CD4-positive, alpha-beta memory T cell (primary cell): ENCODE measurements at regions of chr7 and their contacts with region 1.

Region 1: GRCh38 chr7:90455163-90456030 is 14.0 kb upstream of the PTTG1IP2 start:
- DNase-seq: peak in 4 of 5 donors; percentile 15 to 44 (median 38)
- H3K4me3 ChIP-seq: no peak overlapping the region
- H3K4me3 Mint-ChIP-seq: peak overlapping the region in 7 of 8 donors; percentile 36 to 83 (median 54)
- H3K27ac ChIP-seq: no peak overlapping the region
- H3K27ac Mint-ChIP-seq: peak overlapping the region in 2 of 7 donors; percentile 69 to 87
- H3K4me1 ChIP-seq: peaks cover 7% of the 10 kb centered on the region
- H3K4me1 Mint-ChIP-seq: peaks cover 6 to 7% (median 6%) of the 10 kb centered on the region in 4 donors
- H3K27me3 ChIP-seq: no peaks in the 10 kb centered on the region
- H3K27me3 Mint-ChIP-seq: peaks cover 5 to 17% of the 10 kb centered on the region in 2 donors

Region 2: GRCh38 chr7:90465816-90466215 is 10.4 kb after region 1 on chr7:
- CTCF ChIA-PET with region 1: interaction called, 10 read pairs
- POLR2A ChIA-PET with region 1: no interaction called
- intact Hi-C with region 1: loop called (anchors 1 kb)
- DNase-seq: no peak
- H3K4me3 ChIP-seq: no peak overlapping the region
- H3K4me3 Mint-ChIP-seq: peak overlapping the region in 3 of 8 donors; percentile 4 to 16 (median 6)
- H3K27ac ChIP-seq: no peak overlapping the region
- H3K27ac Mint-ChIP-seq: no peak overlapping the region
- H3K4me1 ChIP-seq: no peaks in the 10 kb centered on the region
- H3K4me1 Mint-ChIP-seq: peaks cover 8 to 14% (median 11%) of the 10 kb centered on the region in 4 donors
- H3K27me3 ChIP-seq: no peaks in the 10 kb centered on the region
- H3K27me3 Mint-ChIP-seq: peaks cover 0 to 2% of the 10 kb centered on the region in 2 donors

Region 3: GRCh38 chr7:90595801-90596671 is 140.6 kb after region 1 on chr7 and contains the start of gene CDK14:
- CTCF ChIA-PET with region 1: no interaction called
- POLR2A ChIA-PET with region 1: no interaction called
- intact Hi-C with region 1: loop called (anchors 10 kb)
- DNase-seq: peak in 1 of 5 donors; percentile 10
- H3K4me3 ChIP-seq: no peak within 1 kb of the TSS
- H3K4me3 Mint-ChIP-seq: peak within 1 kb of the TSS; percentile 73 to 84 (median 80)
- H3K27ac ChIP-seq: no peak within 1 kb of the TSS
- H3K27ac Mint-ChIP-seq: no peak within 1 kb of the TSS
- H3K4me1 ChIP-seq: peaks cover 11% of the 10 kb centered on the region
- H3K4me1 Mint-ChIP-seq: peaks cover 8 to 20% (median 16%) of the 10 kb centered on the region in 4 donors
- H3K27me3 ChIP-seq: peaks cover 10% of the 10 kb centered on the region
- H3K27me3 Mint-ChIP-seq: peaks cover 37 to 40% of the 10 kb centered on the region in 2 donors
- total RNA-seq, gene CDK14: 0.47 to 0.81 TPM

Region 4: GRCh38 chr7:90629297-90629918 is 174.0 kb after region 1 on chr7:
- CTCF ChIA-PET with region 1: interaction called, 4 read pairs
- POLR2A ChIA-PET with region 1: no interaction called
- intact Hi-C with region 1: loop called (anchors 1 kb)
- DNase-seq: no peak
- H3K4me3 ChIP-seq: no peak overlapping the region
- H3K4me3 Mint-ChIP-seq: no peak overlapping the region
- H3K27ac ChIP-seq: no peak overlapping the region
- H3K27ac Mint-ChIP-seq: no peak overlapping the region
- H3K4me1 ChIP-seq: no peaks in the 10 kb centered on the region
- H3K4me1 Mint-ChIP-seq: no peaks in the 10 kb centered on the region
- H3K27me3 ChIP-seq: no peaks in the 10 kb centered on the region
- H3K27me3 Mint-ChIP-seq: peaks cover 0 to 1% of the 10 kb centered on the region in 2 donors

Region 5: DNA sequence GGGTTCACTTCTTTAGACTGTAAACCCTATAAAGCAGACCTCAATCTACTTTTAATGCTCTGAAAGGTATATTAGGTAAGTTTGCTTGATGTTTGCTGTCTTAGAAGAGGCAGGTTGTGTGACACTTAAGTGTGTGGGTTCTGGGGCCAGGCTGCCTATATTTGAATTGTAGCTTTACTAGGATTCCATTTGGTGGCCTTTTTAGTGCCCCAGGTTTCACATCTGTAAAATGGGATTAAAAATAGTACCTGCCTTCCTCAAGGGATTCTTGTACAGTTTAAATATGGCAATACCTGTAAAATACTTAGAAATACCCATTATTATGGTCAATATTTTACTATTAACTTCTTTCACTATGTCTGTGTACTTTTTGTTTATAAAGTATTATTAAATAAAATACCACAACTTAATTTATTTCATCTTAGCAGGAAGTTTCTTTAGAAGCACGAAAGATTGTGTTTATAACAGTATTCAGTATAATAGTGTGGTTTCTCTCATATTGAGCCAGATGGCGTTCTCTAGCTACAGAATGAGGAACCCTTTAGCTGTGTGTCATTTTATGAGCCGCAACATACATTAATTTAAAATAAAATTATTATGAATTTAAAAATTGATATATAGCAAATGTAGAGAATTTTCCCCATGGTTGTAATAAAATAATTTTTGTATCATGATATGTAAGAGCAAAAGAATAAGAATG is 234.9 kb after region 1 on chr7:
- CTCF ChIA-PET with region 1: no interaction called
- POLR2A ChIA-PET with region 1: no interaction called
- intact Hi-C with region 1: no loop called
- DNase-seq: no peak
- H3K4me3 ChIP-seq: no peak overlapping the region
- H3K4me3 Mint-ChIP-seq: no peak overlapping the region
- H3K27ac ChIP-seq: no peak overlapping the region
- H3K27ac Mint-ChIP-seq: no peak overlapping the region
- H3K4me1 ChIP-seq: no peaks in the 10 kb centered on the region
- H3K4me1 Mint-ChIP-seq: no peaks in the 10 kb centered on the region
- H3K27me3 ChIP-seq: no peaks in the 10 kb centered on the region
- H3K27me3 Mint-ChIP-seq: no peaks in the 10 kb centered on the region

Region 6: DNA sequence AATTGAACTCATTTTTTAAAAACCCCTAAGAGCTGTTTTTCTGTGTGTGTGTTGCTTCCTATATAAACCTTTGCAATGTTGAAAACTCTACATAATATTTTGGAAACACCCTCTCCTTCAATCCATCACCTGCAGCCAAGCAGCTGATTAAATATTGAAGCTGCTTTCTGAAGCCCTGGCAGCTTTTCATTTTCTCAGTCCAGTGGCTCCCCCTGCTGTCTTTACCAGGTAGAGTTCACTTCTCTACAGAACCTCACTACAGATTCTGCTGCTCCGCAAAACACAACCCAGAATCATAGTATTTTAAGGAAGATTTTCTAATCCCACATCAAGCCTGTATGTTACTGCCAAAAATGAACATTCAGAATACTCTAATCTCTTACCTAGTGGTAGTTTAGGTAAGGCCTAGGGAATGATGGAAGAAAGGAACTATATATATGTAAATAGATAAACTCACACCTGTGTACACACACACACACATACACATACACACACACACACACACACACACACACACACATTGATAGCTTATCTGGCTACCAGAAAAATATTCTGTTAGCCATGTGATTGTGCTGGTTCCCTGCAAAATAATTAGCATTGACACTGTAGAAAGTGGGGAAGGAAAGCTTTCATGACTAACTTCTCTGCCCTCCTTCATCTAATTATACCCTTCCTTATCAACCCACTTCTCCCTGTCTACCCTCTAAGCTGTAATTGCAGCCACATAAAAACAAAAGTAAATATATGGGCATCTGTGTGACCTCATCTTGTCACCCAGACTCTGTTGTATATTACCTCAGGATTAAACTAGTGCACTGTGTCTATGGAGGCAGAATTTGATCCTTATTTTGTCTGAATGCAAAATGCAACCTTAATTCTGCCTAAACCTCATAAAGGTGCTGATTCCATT is 579.3 kb after region 1 on chr7:
- CTCF ChIA-PET with region 1: interaction called, 4 read pairs
- POLR2A ChIA-PET with region 1: no interaction called
- intact Hi-C with region 1: loop called (anchors 10 kb)
- DNase-seq: no peak
- H3K4me3 ChIP-seq: no peak overlapping the region
- H3K4me3 Mint-ChIP-seq: no peak overlapping the region
- H3K27ac ChIP-seq: no peak overlapping the region
- H3K27ac Mint-ChIP-seq: no peak overlapping the region
- H3K4me1 ChIP-seq: no peaks in the 10 kb centered on the region
- H3K4me1 Mint-ChIP-seq: no peaks in the 10 kb centered on the region
- H3K27me3 ChIP-seq: no peaks in the 10 kb centered on the region
- H3K27me3 Mint-ChIP-seq: peaks cover 0 to 1% of the 10 kb centered on the region in 2 donors